ENCODE measurements at regions of chr12 and their contacts with region 1.

Region 1: DNA sequence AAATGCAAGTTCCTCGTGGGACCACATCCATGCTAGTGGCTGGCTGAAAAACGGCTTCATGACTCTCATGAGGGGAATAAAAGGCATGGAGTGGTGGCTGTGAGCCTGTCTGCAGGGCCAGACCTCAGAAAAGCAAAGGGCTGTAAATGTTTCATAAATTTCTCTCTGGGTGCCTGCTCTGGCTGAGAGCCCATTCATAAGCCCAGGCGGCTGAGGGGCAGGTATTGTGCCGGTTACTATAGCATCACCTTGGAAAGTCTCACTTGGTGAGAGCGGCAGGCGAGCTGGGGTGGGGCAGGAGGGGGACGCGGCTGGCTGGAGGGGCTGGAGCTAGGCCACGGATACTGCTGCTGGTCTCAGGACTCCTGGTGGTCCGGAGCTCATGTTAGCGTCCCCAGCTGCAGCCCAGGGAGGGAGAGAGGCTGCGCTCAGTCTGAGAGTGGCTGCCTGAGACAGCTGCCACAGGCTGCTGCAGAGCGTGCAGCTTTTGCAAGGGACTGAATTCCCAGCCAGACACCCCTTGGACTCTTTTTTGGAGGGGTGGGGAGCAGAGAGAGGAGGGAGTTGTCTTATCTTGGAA is at the start of gene SLC17A8:
- DNase-seq: no peak
- H3K4me3 Mint-ChIP-seq: no peak within 1 kb of the TSS
- H3K27ac Mint-ChIP-seq: no peak within 1 kb of the TSS
- H3K4me1 Mint-ChIP-seq: peaks cover 25% of the 10 kb centered on the region
- H3K27me3 Mint-ChIP-seq: no peaks in the 10 kb centered on the region
- CTCF ChIP-seq: no peak
- total RNA-seq, gene SLC17A8: not detected in 2 replicates

Region 2: GRCh38 chr12:101323255-101323654 is 966.5 kb after region 1 on chr12:
- CTCF ChIA-PET with region 1: no interaction called
- intact Hi-C with region 1: loop called (anchors 10 kb)
- DNase-seq: no peak
- H3K4me3 Mint-ChIP-seq: no peak overlapping the region
- H3K27ac Mint-ChIP-seq: no peak overlapping the region
- H3K4me1 Mint-ChIP-seq: no peaks in the 10 kb centered on the region
- H3K27me3 Mint-ChIP-seq: no peaks in the 10 kb centered on the region
- CTCF ChIP-seq: no peak

Measured in Calu3 (cell line).